ENCODE measurements at regions of chr12 and their contacts with region 1.

Region 1: GRCh38 chr12:56998981-56999380 is 7.4 kb downstream of the ZBTB39 start:
- DNase-seq: peak; percentile 79
- H3K4me3 Mint-ChIP-seq: no peak overlapping the region
- H3K27ac Mint-ChIP-seq: peak overlapping the region; percentile 48
- H3K4me1 Mint-ChIP-seq: peaks cover 53% of the 10 kb centered on the region
- H3K27me3 Mint-ChIP-seq: no peaks in the 10 kb centered on the region

Region 2: GRCh38 chr12:56839915-56840325 is 159.1 kb before region 1 on chr12:
- CTCF ChIA-PET with region 1: interaction called, 5 read pairs
- intact Hi-C with region 1: loop called (anchors 1 kb)
- DNase-seq: peak; percentile 70
- H3K4me3 Mint-ChIP-seq: no peak overlapping the region
- H3K27ac Mint-ChIP-seq: no peak overlapping the region
- H3K4me1 Mint-ChIP-seq: peaks cover 17% of the 10 kb centered on the region
- H3K27me3 Mint-ChIP-seq: no peaks in the 10 kb centered on the region

Measured in activated naive CD4-positive, alpha-beta T cell treated with anti-CD3 and anti-CD28 coated beads for 36 hours (primary cell).